ENCODE measurements at regions of chr2 and their contacts with region 1.

Region 1: GRCh38 chr2:43484323-43484930 is 111.4 kb downstream of the THADA start:
- DNase-seq: no peak
- H3K4me3 Mint-ChIP-seq: no peak overlapping the region
- H3K27ac Mint-ChIP-seq: no peak overlapping the region
- H3K4me1 Mint-ChIP-seq: peaks cover 7% of the 10 kb centered on the region
- H3K27me3 Mint-ChIP-seq: no peaks in the 10 kb centered on the region

Region 2: DNA sequence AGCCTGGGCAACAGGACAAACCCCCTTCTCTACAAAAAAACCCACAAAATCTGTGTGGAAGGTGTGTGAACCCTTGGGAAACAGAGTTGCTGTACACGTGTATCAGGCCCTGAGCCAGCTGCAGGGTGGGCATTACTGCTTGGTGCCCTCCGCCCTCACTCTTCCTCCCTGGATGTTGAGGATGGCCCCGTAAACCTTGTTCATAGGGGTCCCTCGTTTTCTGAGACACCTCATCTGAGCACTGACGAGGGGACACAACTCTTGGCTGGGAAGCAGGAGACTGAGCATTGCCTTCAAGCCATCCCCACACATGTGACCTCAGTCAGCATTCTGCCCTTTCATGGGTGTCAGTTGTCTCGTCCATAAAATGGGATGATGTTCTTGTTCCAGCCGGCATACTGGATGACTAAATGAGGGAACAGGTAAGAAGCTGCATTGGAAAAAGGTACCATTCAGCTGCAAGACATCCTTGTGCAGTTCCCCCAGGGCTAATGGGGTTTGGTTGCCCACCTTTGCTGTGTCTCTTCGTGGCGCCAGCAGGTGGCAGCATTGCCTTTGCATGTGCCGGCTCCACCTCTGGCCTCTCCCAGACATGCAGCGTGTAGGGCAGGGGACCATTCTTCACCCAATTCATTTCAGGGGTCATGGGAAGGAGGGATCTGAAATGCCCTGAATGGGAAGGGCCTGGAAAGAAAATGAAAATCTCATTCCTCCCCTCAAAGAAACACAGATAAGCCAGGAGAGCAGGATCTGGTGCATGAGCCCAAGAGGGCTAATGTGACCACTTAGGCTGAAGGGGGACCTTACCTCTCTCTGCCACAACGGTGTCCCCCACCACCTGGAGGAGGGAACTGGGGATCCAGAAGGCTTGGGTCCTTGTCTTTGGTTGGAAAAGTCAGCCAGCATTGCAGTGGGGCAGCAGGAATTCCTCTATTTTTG is 655.7 kb before region 1 on chr2:
- intact Hi-C with region 1: loop called (anchors 5 kb)
- DNase-seq: peak; percentile 52
- H3K4me3 Mint-ChIP-seq: no peak overlapping the region
- H3K27ac Mint-ChIP-seq: no peak overlapping the region
- H3K4me1 Mint-ChIP-seq: peaks cover 16% of the 10 kb centered on the region
- H3K27me3 Mint-ChIP-seq: peaks cover 14% of the 10 kb centered on the region

Region 3: GRCh38 chr2:42947809-42948600 is 536.4 kb before region 1 on chr2:
- intact Hi-C with region 1: loop called (anchors 1 kb)
- DNase-seq: no peak
- H3K4me3 Mint-ChIP-seq: no peak overlapping the region
- H3K27ac Mint-ChIP-seq: no peak overlapping the region
- H3K4me1 Mint-ChIP-seq: peaks cover 7% of the 10 kb centered on the region
- H3K27me3 Mint-ChIP-seq: peaks cover 15% of the 10 kb centered on the region

Region 4: GRCh38 chr2:43387092-43388062 is 97.0 kb before region 1 on chr2:
- intact Hi-C with region 1: loop called (anchors 5 kb)
- DNase-seq: no peak
- H3K4me3 Mint-ChIP-seq: no peak overlapping the region
- H3K27ac Mint-ChIP-seq: peak overlapping the region; percentile 50
- H3K4me1 Mint-ChIP-seq: peaks cover 27% of the 10 kb centered on the region
- H3K27me3 Mint-ChIP-seq: no peaks in the 10 kb centered on the region

Region 5: GRCh38 chr2:43611987-43612894 is 127.8 kb after region 1 on chr2:
- intact Hi-C with region 1: loop called (anchors 1 kb)
- DNase-seq: peak; percentile 60
- H3K4me3 Mint-ChIP-seq: no peak overlapping the region
- H3K27ac Mint-ChIP-seq: no peak overlapping the region
- H3K4me1 Mint-ChIP-seq: peaks cover 5% of the 10 kb centered on the region
- H3K27me3 Mint-ChIP-seq: peaks cover 9% of the 10 kb centered on the region

Region 6: DNA sequence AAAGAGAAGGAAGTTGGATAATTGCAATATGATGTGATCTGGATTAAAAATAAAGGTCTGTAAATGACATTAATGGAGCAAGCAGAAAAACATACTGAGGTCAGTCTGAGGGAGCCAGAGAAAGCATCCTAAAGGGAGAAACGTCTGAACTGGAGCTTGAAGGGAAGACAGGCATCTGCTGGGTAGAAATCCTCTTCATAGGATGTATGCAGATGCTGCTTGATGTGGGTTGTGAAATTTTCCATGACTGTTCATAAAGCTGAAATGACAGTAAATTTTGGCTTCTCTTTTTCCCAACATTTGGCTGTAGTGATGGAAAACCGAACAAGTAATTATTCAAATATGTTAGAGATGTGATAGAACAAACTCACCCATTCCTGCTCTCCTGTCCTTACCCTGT is 1165.0 kb after region 1 on chr2:
- intact Hi-C with region 1: no loop called
- DNase-seq: no peak
- H3K4me3 Mint-ChIP-seq: no peak overlapping the region
- H3K27ac Mint-ChIP-seq: no peak overlapping the region
- H3K4me1 Mint-ChIP-seq: no peaks in the 10 kb centered on the region
- H3K27me3 Mint-ChIP-seq: no peaks in the 10 kb centered on the region

Measured in activated T-helper 1 cell treated with anti-CD3 and anti-CD28 coated beads, Interleukin-12 subunit alpha, Interleukin-12 subunit beta, Interleukin-2, Interleukin-4 antibody, amounts not matched to agents 30 ng/mL and 10 ng/mL and 1 ng/mL, durations not matched to agents 14 hours and 24 hours and 36 hours (primary cell).